GM12878 (cell line): ENCODE measurements at regions of chr17 and their contacts with region 1.

Region 1: GRCh38 chr17:19377602-19378392 is 501 bp upstream of the MAPK7 start:
- DNase-seq: peak; percentile 96
- ATAC-seq: peak; percentile 98
- H3K4me3 ChIP-seq: peak overlapping the region; percentile 84
- H3K27ac ChIP-seq: peak overlapping the region; percentile 93
- H3K4me1 ChIP-seq: no peaks in the 10 kb centered on the region
- H3K27me3 ChIP-seq: no peaks in the 10 kb centered on the region
- CTCF ChIP-seq: no peak
- EP300 ChIP-seq: peak in 1 of 2 experiments; percentile 20; a peak in 1 of 4 replicates
- POLR2A ChIP-seq: peak; percentile 88
- RAD21 ChIP-seq: no peak

Region 2: DNA sequence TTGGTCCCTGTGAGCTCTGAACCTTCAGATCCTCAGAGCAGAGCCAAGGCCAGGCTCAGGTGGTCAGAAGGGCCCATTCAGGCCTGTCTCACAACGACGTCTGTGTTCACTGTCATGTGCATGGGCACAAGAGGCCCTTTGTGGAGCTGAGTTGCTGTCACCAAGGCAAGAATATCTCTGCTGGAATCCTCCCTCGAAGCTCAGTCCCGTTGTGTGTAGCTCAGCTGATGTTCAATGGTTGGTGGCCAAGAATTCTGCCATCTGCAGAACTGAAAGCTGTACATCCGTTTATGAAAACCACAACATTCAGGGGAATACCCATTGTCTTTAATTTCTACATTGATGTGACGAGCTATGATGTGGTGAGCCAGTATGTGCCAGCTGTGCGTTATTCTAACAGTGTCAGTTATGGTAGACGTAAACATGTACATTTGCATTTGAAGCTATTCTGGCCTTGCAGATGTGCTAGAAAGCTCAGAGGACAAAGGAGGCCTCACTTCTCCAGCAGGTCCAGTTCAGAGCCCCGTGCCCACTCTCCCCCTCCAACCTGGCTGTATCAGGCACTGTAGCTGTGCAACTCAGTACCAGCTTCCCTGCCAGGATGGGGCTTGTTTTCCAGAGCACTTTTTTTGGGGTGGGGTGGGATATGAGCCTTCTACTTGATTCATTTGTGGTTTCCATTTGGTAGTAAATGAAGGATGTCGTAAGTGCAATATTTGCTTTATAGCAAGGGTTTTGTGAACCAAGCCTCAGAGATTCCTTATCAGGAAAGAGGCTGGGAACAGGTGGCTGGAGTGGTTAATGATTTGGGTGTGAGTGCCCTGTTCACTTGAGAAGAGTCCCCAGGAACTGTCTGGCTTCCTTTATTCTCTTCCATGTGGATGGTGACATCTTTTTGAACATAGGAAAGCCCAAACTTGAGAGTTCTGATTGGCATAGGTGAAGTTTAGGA is 71.4 kb before region 1 on chr17:
- CTCF ChIA-PET with region 1: no interaction called
- POLR2A ChIA-PET with region 1: interaction called, 3 read pairs
- RAD21 ChIA-PET with region 1: interaction called, 10 read pairs
- SMC1A ChIA-PET with region 1: no interaction called
- in situ Hi-C with region 1: no loop called
- intact Hi-C with region 1: no loop called
- DNase-seq: peak; percentile 94
- ATAC-seq: peak; percentile 85
- H3K4me3 ChIP-seq: no peak overlapping the region; the same call in 1 of the 2 replicates
- H3K27ac ChIP-seq: peak overlapping the region; percentile 9; the same call in 1 of the 2 replicates
- H3K4me1 ChIP-seq: peaks cover 46% of the 10 kb centered on the region
- H3K27me3 ChIP-seq: no peaks in the 10 kb centered on the region; a peak in 1 of 4 replicates
- CTCF ChIP-seq: no peak
- EP300 ChIP-seq: peak; percentile 79 to 92; a peak in 3 of 4 replicates
- POLR2A ChIP-seq: no peak; the same call in 1 of the 2 replicates
- RAD21 ChIP-seq: no peak

Region 3: DNA sequence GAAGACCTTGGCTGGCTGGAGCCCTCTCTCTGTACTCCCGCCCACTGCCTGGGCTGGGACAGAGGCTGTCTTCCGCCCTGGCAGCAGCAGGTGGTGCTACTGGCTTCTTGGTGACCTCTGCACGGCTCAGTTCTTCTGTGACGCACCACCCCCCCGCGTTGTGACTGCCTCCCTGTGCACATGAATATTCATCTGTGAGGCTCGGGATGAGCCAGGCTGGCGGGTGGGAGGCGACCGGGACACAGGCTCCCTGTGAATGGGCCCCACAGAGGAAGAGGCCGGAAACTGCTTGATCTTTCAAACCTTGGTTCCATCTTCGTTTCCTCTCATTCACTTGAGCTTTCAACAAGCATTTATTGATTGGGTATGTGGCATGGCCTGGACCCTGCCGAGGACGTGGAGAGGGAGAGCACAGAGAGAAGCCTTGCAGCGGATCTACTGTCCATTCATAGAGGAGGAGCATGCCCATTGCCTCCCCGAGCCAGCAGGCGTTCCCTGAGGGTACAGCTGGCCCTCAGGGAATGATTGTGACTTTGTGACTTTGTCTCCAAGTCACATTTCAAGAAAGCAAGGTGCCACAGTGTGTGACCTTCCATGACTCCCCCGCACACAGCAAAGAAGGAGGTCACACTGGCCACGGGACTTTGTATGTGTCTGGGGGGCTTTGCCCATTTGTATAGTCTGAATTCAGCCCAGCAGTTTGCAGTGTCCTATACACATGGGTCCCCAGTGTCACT is 60.3 kb before region 1 on chr17:
- CTCF ChIA-PET with region 1: no interaction called
- POLR2A ChIA-PET with region 1: no interaction called
- RAD21 ChIA-PET with region 1: no interaction called
- SMC1A ChIA-PET with region 1: no interaction called
- in situ Hi-C with region 1: no loop called
- intact Hi-C with region 1: no loop called
- DNase-seq: no peak
- ATAC-seq: peak; percentile 97
- H3K4me3 ChIP-seq: no peak overlapping the region
- H3K27ac ChIP-seq: no peak overlapping the region
- H3K4me1 ChIP-seq: no peaks in the 10 kb centered on the region
- H3K27me3 ChIP-seq: no peaks in the 10 kb centered on the region
- CTCF ChIP-seq: peak; percentile 16 to 39 (median 29); a peak in 3 of 6 replicates
- EP300 ChIP-seq: no peak
- POLR2A ChIP-seq: no peak
- RAD21 ChIP-seq: no peak

Region 4: DNA sequence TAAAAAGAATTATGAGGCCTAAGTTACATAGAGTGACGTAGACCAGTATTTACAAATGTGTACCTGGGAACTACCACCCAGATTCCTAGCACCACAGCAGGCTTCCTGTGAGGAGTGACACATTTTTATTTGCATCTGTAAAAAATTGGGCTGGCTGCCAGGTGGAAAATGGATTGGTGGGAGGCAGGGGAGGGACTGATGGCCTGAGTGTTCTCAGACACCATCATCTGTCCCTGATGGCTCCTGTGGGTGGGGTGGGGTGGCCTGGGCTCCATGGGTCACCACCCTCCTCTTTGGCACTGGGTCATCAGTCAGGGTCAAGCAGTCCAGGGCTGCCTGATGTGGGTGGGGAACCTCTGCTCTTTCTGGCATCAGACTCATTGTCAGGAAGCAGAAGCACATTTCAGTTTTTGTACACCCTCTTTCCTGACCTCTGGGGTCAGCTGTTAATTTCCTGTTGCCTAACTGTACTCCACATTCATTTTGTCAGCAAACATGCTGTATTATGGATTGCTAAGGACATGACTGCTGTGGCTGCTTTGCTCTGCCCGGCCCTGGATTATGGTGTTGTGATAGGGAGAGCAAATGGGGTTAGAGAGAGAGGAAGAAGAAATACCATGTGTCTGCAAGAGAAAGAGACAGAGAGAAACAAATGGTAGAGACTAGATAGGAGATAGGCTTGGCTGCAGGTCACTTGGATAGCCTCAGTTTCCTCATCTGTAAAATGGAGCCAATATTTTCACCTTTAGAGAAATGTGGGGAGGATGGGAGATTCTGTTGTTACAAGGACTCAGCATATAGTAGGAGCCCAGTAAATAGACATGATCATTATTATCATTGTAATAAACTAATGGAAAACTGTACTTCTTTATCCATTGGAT is 20.7 kb after region 1 on chr17:
- CTCF ChIA-PET with region 1: interaction called, 9 read pairs
- POLR2A ChIA-PET with region 1: interaction called, 5 read pairs
- RAD21 ChIA-PET with region 1: interaction called, 14 read pairs
- SMC1A ChIA-PET with region 1: interaction called, 4 read pairs
- in situ Hi-C with region 1: no loop called
- intact Hi-C with region 1: no loop called
- DNase-seq: no peak
- ATAC-seq: no peak
- H3K4me3 ChIP-seq: no peak overlapping the region
- H3K27ac ChIP-seq: no peak overlapping the region
- H3K4me1 ChIP-seq: peaks cover 4% of the 10 kb centered on the region; the same call in 1 of the 2 replicates
- H3K27me3 ChIP-seq: no peaks in the 10 kb centered on the region; a peak in 1 of 4 replicates
- CTCF ChIP-seq: no peak
- EP300 ChIP-seq: no peak
- POLR2A ChIP-seq: no peak
- RAD21 ChIP-seq: no peak

Region 5: GRCh38 chr17:19464031-19465026 is 86.5 kb after region 1 on chr17:
- CTCF ChIA-PET with region 1: no interaction called
- POLR2A ChIA-PET with region 1: interaction called, 5 read pairs
- RAD21 ChIA-PET with region 1: interaction called, 13 read pairs
- SMC1A ChIA-PET with region 1: no interaction called
- in situ Hi-C with region 1: no loop called
- intact Hi-C with region 1: loop called (anchors 5 kb)
- DNase-seq: no peak
- ATAC-seq: no peak
- H3K4me3 ChIP-seq: no peak overlapping the region
- H3K27ac ChIP-seq: 0 out of 2 replicates have a peak overlapping the region, but pooled peaks have one; percentile 11
- H3K4me1 ChIP-seq: peaks cover 17% of the 10 kb centered on the region
- H3K27me3 ChIP-seq: no peaks in the 10 kb centered on the region
- CTCF ChIP-seq: no peak
- EP300 ChIP-seq: no peak
- POLR2A ChIP-seq: no peak
- RAD21 ChIP-seq: no peak